Keratinocyte (primary cell): ENCODE measurements at regions of chr20 and their contacts with region 1.

Region 1: GRCh38 chr20:17281478-17281877 is 54.6 kb downstream of the PCSK2 start:
- DNase-seq: no peak
- H3K4me3 ChIP-seq: no peak overlapping the region
- H3K27ac ChIP-seq: no peak overlapping the region
- H3K4me1 ChIP-seq: no peaks in the 10 kb centered on the region
- H3K27me3 ChIP-seq: no peaks in the 10 kb centered on the region
- CTCF ChIP-seq: peak in 2 of 3 experiments; percentile 23 to 28

Region 2: GRCh38 chr20:17179840-17180239 is 101.6 kb before region 1 on chr20:
- dilution Hi-C with region 1: loop called (anchors 10 kb)
- DNase-seq: no peak
- H3K4me3 ChIP-seq: no peak overlapping the region
- H3K27ac ChIP-seq: no peak overlapping the region
- H3K4me1 ChIP-seq: no peaks in the 10 kb centered on the region
- H3K27me3 ChIP-seq: no peaks in the 10 kb centered on the region
- CTCF ChIP-seq: no peak